Activated CD4-positive, alpha-beta memory T cell treated with anti-CD3 and anti-CD28 coated beads, Interleukin-2, amount 10 ng/mL, durations not matched to agents 7 days and 5 days (primary cell): ENCODE measurements at regions of chr2 and their contacts with region 1.

Region 1: GRCh38 chr2:191637182-191638078 is 40.5 kb upstream of the NABP1 start:
- DNase-seq: no peak
- H3K4me3 Mint-ChIP-seq: peak overlapping the region; percentile 42
- H3K27ac Mint-ChIP-seq: peak overlapping the region; percentile 67
- H3K4me1 Mint-ChIP-seq: peaks cover 46% of the 10 kb centered on the region
- H3K27me3 Mint-ChIP-seq: peaks cover 48% of the 10 kb centered on the region

Region 2: DNA sequence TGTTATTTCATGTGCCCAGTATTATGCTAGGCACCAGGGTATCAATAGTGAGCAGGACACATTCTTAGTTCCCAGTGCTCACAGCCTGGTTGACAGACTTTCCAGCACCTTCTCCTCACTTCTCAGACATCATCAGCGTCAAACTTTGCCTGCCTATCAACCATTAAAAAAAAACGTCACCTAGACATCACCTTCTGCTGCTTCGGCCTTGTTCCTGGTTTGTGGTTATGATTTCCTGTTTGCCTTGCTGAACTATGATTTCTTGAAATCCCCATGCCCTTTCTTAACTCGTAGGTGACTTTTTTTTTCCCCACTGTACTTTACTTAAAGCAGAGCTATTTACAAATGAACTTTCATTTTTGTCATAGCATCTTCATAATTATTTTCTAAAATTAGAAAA is 19.9 kb before region 1 on chr2:
- CTCF ChIA-PET with region 1: interaction called, 8 read pairs
- POLR2A ChIA-PET with region 1: interaction called, 27 read pairs
- DNase-seq: peak; percentile 47
- H3K4me3 Mint-ChIP-seq: peak overlapping the region; percentile 5
- H3K27ac Mint-ChIP-seq: peak overlapping the region; percentile 71
- H3K4me1 Mint-ChIP-seq: peaks cover 31% of the 10 kb centered on the region
- H3K27me3 Mint-ChIP-seq: no peaks in the 10 kb centered on the region

Region 3: GRCh38 chr2:191625016-191625415 is 12.4 kb before region 1 on chr2:
- CTCF ChIA-PET with region 1: interaction called, 8 read pairs
- POLR2A ChIA-PET with region 1: interaction called, 13 read pairs
- DNase-seq: peak; percentile 71
- H3K4me3 Mint-ChIP-seq: no peak overlapping the region
- H3K27ac Mint-ChIP-seq: peak overlapping the region; percentile 74
- H3K4me1 Mint-ChIP-seq: peaks cover 40% of the 10 kb centered on the region
- H3K27me3 Mint-ChIP-seq: peaks cover 11% of the 10 kb centered on the region